Endothelial cell of umbilical vein (primary cell): ENCODE measurements at regions of chr16 and their contacts with region 1.

Region 1: DNA sequence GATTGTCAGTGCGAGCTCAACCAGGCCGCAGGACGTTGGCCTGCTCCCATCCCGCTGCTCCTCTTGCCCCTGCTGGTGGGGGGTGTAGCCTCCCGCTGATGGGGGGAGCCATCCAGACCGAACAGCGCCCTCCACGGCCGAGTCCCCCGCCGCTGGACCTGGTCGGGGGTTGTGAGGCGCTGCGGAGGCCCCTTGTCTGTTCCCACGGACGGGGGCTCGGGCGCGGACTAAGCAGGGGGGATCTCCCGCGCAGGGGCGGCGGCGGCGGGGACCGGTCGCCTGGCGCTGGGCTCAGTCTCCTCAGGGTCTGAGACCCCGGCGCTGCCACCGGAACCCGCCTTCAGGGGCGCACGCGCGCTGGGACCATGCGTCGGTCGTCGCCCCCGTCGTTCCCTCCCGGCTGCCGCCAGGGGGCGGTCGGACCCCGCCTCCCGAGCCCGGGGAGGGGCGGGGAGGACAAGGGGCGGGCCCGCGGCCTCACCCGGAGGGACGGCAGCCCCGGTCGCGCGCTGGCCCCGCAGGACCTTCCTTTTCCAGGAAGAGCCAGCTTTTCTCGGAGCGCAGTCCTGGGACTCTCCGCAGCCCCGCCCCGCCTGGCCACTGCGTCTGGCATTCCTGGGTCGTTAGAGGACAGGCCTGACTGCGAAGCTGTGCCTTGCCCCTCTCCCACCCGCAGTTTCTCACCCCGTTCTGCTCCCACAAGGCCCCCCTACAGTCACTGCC is 6.3 kb upstream of the IL32 start:
- DNase-seq: peak; percentile 85
- H3K4me3 ChIP-seq: peak overlapping the region; percentile 44 to 64 (median 59)
- H3K27ac ChIP-seq: peak overlapping the region; percentile 58
- H3K4me1 ChIP-seq: peaks cover 9% of the 10 kb centered on the region
- H3K27me3 ChIP-seq: no peaks in the 10 kb centered on the region
- CTCF ChIP-seq: peak; percentile 73 to 84
- POLR2A ChIP-seq: peak; percentile 76

Region 2: DNA sequence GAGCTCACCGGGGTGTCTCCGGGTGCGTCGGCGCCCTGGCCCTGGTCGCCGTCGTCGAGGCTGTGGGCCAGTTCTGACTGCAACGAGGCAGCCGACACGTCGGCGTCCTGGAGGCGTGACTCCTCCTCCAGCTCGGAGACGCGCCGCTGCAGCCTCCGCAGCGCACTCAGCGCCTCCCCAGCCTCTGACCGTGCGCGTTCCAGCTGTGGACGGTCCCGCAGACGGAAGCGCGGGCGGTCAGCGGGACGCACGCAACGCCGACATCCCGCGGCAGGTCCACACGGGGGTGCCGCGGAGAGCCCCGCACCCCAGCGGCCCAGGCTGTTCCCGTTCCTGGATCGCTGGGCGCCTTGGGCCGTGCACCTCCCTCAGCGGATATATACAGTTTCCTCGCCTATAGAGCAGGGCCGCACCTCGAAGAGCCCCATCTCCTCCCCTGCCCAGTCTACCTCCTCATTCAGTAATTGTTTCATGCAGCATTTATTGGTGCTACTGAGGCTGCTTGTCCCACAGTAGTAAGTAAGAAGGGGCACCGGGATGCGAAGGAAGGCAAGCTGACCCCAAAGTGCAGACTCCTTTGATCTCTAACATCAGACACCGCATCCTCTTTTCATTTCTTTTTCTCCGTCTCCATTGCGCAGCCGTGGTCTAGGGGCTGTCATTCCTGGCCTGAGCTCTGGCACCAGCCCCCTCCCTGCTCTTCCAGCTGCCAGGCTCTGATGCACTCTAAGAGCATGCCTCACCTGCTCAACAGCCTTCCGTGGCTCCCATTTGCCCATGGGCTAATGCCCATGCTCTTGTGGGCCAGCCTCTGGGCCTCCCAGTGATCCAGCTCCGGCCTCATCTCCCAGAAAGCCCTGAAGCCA is 29.4 kb before region 1 on chr16:
- CTCF ChIA-PET with region 1: interaction called, 57 read pairs
- POLR2A ChIA-PET with region 1: no interaction called
- dilution Hi-C with region 1: no loop called
- intact Hi-C with region 1: loop called (anchors 2 kb)
- DNase-seq: no peak
- H3K4me3 ChIP-seq: no peak overlapping the region
- H3K27ac ChIP-seq: no peak overlapping the region
- H3K4me1 ChIP-seq: no peaks in the 10 kb centered on the region
- H3K27me3 ChIP-seq: peaks cover 36 to 41% of the 10 kb centered on the region in 2 experiments
- CTCF ChIP-seq: no peak
- POLR2A ChIP-seq: no peak

Region 3: DNA sequence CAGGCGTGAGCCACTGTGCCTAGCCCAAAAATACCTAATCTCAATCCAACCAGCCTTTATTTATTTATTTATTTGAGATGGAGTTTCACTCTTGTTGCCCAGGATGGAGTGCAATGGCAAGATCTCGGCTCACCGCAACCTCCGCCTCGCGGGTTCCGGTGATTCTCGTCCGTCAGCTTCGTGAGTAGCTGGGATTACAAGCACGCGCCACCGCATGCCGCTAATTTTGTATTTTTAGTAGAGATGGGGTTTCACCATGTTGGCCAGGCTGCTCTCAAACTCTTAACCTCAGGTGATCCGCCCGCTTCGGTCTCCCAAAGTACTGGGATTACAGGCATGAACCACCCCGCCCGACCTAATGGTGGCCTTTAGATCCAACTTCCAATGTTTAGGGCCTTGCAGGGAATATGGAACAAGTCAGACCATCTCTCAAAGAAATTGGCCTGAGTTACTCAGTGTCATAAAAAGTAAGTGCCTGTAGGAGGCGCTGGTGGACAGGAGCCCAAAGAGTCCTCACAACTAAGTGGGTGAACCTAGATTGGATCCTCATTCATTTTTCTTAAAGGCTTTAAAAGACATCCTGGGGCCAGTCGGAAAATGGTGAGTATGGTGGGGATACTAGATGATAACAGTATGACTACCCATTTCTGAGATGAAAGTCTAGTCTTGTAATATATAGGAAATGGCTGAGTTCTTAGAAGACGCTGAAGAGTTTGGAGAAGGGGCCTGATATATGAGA is 35.3 kb after region 1 on chr16:
- CTCF ChIA-PET with region 1: interaction called, 29 read pairs
- POLR2A ChIA-PET with region 1: no interaction called
- dilution Hi-C with region 1: no loop called
- intact Hi-C with region 1: loop called (anchors 1 kb)
- DNase-seq: peak; percentile 74
- H3K4me3 ChIP-seq: no peak overlapping the region
- H3K27ac ChIP-seq: no peak overlapping the region
- H3K4me1 ChIP-seq: peaks cover under 1% of the 10 kb centered on the region
- H3K27me3 ChIP-seq: peaks cover 0 to 2% of the 10 kb centered on the region in 2 experiments
- CTCF ChIP-seq: peak; percentile 61 to 70
- POLR2A ChIP-seq: no peak

Region 4: GRCh38 chr16:3112058-3112880 is 53.1 kb after region 1 on chr16 and contains the start of gene ZNF205:
- CTCF ChIA-PET with region 1: interaction called, 38 read pairs
- POLR2A ChIA-PET with region 1: no interaction called
- dilution Hi-C with region 1: no loop called
- intact Hi-C with region 1: loop called (anchors 1 kb)
- DNase-seq: peak; percentile 61
- H3K4me3 ChIP-seq: peak within 1 kb of the TSS; percentile 44 to 78 (median 59)
- H3K27ac ChIP-seq: no peak within 1 kb of the TSS
- H3K4me1 ChIP-seq: peaks cover 18% of the 10 kb centered on the region
- H3K27me3 ChIP-seq: no peaks in the 10 kb centered on the region
- CTCF ChIP-seq: no peak
- POLR2A ChIP-seq: peak; percentile 34
- total RNA-seq, gene ZNF205: 15.5 and 18.5 TPM in 2 replicates

Region 5: DNA sequence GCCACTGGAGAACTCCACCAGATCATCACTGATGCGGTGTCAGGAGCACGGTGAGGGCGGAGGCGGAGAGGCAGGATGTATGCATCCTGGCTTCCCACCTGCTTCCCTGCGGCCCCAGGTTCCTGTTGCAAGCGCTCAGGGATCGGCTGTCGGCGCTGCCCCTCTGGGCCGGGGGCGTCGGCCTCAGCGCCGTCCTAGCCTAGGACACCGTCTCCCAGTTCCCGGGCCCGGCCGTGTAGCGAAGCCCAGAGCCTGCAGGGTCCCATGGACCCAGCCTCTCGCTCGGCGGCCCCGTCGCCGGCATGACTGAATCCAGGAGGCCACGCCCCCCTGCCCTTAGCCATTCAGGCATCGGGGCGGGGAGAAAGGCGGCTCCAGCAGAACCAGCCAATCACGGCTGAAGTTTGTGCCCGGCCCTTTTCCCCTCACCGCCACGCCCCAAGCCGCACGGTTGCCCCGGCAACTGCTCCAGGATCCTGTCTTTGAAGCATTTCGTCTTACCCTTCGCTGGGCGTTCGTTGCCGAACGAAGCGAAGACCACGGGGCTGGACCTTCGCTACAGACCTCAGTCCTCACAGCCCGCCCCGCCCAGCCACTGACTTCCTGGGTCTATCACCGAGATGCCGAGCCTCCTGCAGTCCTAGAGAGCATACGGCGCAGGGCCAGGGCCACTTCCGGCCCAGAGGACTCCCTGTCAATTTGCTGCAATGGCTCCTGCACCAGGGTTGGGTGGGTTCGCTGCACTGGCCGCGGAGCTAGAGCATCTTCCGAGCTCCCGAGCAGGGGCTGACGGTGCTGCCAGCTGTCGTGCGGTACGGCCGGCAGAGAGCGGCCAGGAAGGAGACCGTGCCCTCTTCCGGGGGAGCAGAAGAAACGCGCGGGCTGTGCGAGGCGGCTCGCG is 65.1 kb after region 1 on chr16:
- CTCF ChIA-PET with region 1: interaction called, 113 read pairs
- POLR2A ChIA-PET with region 1: no interaction called
- dilution Hi-C with region 1: no loop called
- intact Hi-C with region 1: loop called (anchors 1 kb)
- DNase-seq: peak; percentile 95
- H3K4me3 ChIP-seq: peak overlapping the region; percentile 45 to 58 (median 46)
- H3K27ac ChIP-seq: no peak overlapping the region
- H3K4me1 ChIP-seq: peaks cover 8% of the 10 kb centered on the region
- H3K27me3 ChIP-seq: no peaks in the 10 kb centered on the region
- CTCF ChIP-seq: peak in 1 of 2 donors; percentile 35
- POLR2A ChIP-seq: peak; percentile 55